ENCODE measurements at regions of chr9 and their contacts with region 1.

Region 1: DNA sequence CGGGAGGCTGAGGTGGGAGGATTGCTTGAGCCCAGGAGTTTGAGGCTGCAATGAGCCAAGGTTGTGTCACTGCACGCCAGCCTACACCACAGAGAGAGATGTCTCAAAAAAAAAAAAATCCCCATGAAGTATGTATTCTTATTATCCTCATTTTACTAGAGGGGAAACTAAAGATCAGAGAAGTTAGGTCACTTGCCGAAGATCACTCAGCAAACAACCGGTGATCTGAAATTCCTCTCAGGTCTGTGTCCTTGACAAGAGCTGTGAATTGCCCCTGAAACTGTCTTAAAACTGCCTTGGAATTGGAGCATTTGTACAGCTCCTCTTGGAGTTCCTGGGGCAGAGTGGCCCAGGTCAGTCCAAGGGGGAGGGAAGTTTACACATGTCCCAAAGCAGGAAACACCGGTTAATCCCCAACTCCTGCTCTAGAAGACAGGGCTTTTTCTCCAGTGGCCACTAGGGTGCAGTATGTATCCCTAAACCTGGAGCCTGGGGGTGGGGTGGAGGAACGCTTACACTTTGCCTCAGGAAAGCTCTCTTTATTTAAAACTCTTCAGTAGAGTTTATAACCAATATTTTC is 27.6 kb downstream of the AQP7 start:
- DNase-seq: peak; percentile 24 to 90
- H3K4me3 ChIP-seq: peak overlapping the region; percentile 22 to 52
- H3K27ac ChIP-seq: peak overlapping the region in 1 of 2 donors; percentile 67
- H3K4me1 ChIP-seq: peaks cover 0 to 3% of the 10 kb centered on the region in 2 donors
- H3K27me3 ChIP-seq: no peaks in the 10 kb centered on the region
- CTCF ChIP-seq: peak; percentile 76 to 89 (median 87)

Region 2: DNA sequence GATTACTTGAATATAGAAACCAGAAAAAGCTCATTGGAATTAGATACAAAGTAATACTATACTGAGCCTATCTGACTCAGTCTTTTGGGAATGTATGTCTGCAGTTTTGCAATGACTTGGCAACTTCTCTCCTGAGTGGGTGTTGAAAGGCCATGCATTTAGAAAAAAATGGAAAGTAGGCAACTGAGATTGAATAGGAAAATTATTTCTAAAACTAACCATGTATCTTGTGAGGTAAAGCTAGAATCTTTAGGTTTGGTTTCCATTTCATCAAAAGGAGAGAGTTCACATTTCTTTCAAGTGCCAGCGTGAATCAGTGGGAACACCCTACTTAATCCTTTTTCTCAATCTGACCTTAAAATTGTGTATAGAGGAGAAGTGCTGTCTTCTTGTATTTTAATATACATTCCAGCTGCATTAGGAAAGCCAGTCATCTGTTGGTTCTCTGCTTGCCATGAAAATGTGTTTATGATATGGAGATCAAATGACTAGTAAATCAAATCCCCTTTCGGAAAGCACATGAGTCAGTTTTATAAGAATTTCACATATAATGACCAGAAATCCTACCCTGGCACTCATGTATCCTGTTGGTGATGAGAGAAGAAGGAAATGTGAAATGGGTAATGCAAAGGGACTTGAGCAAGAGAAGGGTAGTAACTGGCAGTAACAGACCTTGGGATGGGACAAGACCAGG is 54.0 kb before region 1 on chr9:
- intact Hi-C with region 1: no loop called
- DNase-seq: peak in 1 of 2 donors; percentile 66
- H3K4me3 ChIP-seq: no peak overlapping the region
- H3K27ac ChIP-seq: peak overlapping the region; percentile 45 to 56
- H3K4me1 ChIP-seq: peaks cover 0 to 3% of the 10 kb centered on the region in 2 donors
- H3K27me3 ChIP-seq: no peaks in the 10 kb centered on the region
- CTCF ChIP-seq: no peak

Region 3: GRCh38 chr9:33393581-33393980 is 18.9 kb after region 1 on chr9:
- intact Hi-C with region 1: loop called (anchors 1 kb)
- DNase-seq: no peak
- H3K4me3 ChIP-seq: no peak overlapping the region
- H3K27ac ChIP-seq: no peak overlapping the region
- H3K4me1 ChIP-seq: peaks cover 2 to 11% of the 10 kb centered on the region in 2 donors
- H3K27me3 ChIP-seq: no peaks in the 10 kb centered on the region
- CTCF ChIP-seq: no peak

Region 4: GRCh38 chr9:33404788-33405362 is 30.2 kb after region 1 on chr9:
- intact Hi-C with region 1: no loop called
- DNase-seq: no peak
- H3K4me3 ChIP-seq: no peak overlapping the region
- H3K27ac ChIP-seq: no peak overlapping the region
- H3K4me1 ChIP-seq: peaks cover 0 to 15% of the 10 kb centered on the region in 2 donors
- H3K27me3 ChIP-seq: no peaks in the 10 kb centered on the region
- CTCF ChIP-seq: no peak

Region 5: GRCh38 chr9:33415501-33416038 is 40.8 kb after region 1 on chr9:
- intact Hi-C with region 1: loop called (anchors 1 kb)
- DNase-seq: peak in 1 of 2 donors; percentile 82
- H3K4me3 ChIP-seq: no peak overlapping the region
- H3K27ac ChIP-seq: no peak overlapping the region
- H3K4me1 ChIP-seq: no peaks in the 10 kb centered on the region
- H3K27me3 ChIP-seq: no peaks in the 10 kb centered on the region
- CTCF ChIP-seq: peak; percentile 48 to 76 (median 70)

Region 6: DNA sequence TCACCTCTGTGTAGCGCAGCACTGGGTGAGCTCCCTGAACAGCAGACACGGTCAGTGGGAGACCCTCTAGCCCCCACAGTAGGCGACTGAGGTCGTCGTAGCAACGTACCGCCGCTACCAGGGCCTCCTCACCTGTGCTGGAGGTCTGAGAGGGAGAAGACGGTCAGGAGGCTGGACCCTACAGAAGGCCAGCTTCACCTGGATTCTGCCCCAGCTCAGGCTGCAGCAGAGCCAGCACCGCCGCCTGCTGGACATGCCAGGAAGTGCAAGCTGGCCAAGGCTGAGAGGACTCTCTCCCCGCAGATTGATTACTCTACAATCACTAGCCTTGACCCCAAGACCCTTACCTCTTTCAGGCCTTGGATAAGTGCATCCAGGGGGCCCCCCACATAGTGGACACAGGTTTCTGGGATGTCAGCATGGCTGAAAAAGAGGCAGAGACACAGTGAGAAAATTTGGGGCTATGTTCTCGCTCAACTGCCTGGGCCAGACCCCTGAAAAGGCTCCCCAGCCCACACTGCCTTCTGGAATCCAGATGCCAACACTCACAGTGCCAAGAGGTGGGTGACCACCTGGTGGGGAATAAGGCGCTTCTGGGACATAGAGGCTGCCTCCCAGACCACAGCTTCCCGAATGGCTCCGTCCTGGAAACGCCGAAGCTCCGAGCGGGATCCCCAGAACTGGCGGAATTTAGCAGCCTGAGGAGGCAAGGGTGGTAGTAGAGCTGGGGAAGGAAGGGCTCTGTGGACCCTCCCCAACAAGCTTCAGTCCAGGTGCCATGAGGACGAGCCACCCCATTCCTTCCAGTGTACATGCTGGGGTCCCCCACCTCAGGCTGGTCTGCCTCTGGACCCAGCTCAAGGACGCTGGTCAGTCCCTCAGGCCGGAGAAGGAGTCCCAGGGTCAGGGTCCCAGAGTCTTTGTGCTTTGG is 92.1 kb after region 1 on chr9:
- intact Hi-C with region 1: loop called (anchors 1 kb)
- DNase-seq: no peak
- H3K4me3 ChIP-seq: no peak overlapping the region
- H3K27ac ChIP-seq: no peak overlapping the region
- H3K4me1 ChIP-seq: no peaks in the 10 kb centered on the region
- H3K27me3 ChIP-seq: no peaks in the 10 kb centered on the region
- CTCF ChIP-seq: peak; percentile 56 to 95 (median 92)